Caco-2 (cell line): ENCODE measurements at regions of chr5 and their contacts with region 1.

Region 1: DNA sequence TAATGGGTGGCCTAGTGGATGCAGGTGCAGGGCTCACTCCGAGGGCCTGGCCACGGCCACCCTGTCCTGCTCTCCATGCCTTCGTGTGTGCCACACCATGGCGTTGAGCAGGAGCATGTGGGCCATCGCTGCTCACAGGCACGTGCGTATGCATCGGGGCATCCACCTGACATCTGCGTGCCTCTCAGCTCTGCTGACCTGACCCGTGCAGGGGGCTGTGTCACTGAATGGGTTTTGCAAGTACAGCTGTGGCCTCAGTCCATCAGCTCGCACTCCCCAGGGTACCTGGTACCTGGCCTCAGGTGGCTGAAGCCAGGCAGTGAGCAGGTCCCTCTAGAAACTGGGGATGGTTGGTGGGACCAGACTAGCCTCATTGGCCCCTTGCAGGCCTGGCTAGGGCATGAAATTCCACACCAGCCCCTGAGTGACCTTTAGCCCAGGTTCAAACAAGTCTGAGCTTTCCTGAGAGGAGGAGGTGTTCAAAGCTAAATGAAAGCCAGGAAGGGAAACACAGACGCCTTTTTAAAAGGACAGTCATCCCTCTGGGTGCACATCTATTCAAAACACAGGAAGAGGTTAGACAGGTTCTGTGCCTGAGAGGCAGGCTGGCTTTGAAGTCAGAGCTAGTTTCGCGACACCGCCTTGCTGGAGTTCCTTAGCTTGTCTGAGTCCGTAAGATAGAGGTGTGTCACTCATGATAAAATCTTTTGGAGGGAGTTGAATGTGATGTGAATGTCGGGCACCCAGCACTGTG is 74.0 kb downstream of the MACROH2A1 start:
- DNase-seq: peak; percentile 75 to 81
- H3K4me3 ChIP-seq: no peak overlapping the region
- H3K4me3 Mint-ChIP-seq: peak overlapping the region; percentile 7
- H3K27ac Mint-ChIP-seq: peak overlapping the region; percentile 43
- H3K4me1 ChIP-seq: peaks cover 37% of the 10 kb centered on the region
- H3K4me1 Mint-ChIP-seq: peaks cover 34% of the 10 kb centered on the region
- H3K27me3 ChIP-seq: no peaks in the 10 kb centered on the region
- H3K27me3 Mint-ChIP-seq: no peaks in the 10 kb centered on the region
- CTCF ChIP-seq: no peak

Region 2: GRCh38 chr5:135246923-135247795 is 77.9 kb before region 1 on chr5:
- CTCF ChIA-PET with region 1: no interaction called
- POLR2A ChIA-PET with region 1: no interaction called
- intact Hi-C with region 1: no loop called
- DNase-seq: peak in 1 of 2 experiments; percentile 37
- H3K4me3 ChIP-seq: no peak overlapping the region
- H3K4me3 Mint-ChIP-seq: no peak overlapping the region
- H3K27ac Mint-ChIP-seq: no peak overlapping the region
- H3K4me1 ChIP-seq: peaks cover 15% of the 10 kb centered on the region; the same call in 1 of the 2 replicates
- H3K4me1 Mint-ChIP-seq: peaks cover 11% of the 10 kb centered on the region
- H3K27me3 ChIP-seq: no peaks in the 10 kb centered on the region
- H3K27me3 Mint-ChIP-seq: no peaks in the 10 kb centered on the region
- CTCF ChIP-seq: no peak

Region 3: GRCh38 chr5:135263022-135263668 is 61.9 kb before region 1 on chr5:
- CTCF ChIA-PET with region 1: interaction called, 3 read pairs
- POLR2A ChIA-PET with region 1: interaction called, 5 read pairs
- intact Hi-C with region 1: loop called (anchors 2 kb)
- DNase-seq: peak; percentile 87 to 90
- H3K4me3 ChIP-seq: no peak overlapping the region
- H3K4me3 Mint-ChIP-seq: peak overlapping the region; percentile 46
- H3K27ac Mint-ChIP-seq: peak overlapping the region; percentile 56
- H3K4me1 ChIP-seq: peaks cover 36% of the 10 kb centered on the region
- H3K4me1 Mint-ChIP-seq: peaks cover 28% of the 10 kb centered on the region
- H3K27me3 ChIP-seq: no peaks in the 10 kb centered on the region
- H3K27me3 Mint-ChIP-seq: no peaks in the 10 kb centered on the region
- CTCF ChIP-seq: no peak